Activated CD8-positive, alpha-beta T cell treated with anti-CD3 and anti-CD28 coated beads for 36 hours (primary cell): ENCODE measurements at regions of chr7 and their contacts with region 1.

Region 1: DNA sequence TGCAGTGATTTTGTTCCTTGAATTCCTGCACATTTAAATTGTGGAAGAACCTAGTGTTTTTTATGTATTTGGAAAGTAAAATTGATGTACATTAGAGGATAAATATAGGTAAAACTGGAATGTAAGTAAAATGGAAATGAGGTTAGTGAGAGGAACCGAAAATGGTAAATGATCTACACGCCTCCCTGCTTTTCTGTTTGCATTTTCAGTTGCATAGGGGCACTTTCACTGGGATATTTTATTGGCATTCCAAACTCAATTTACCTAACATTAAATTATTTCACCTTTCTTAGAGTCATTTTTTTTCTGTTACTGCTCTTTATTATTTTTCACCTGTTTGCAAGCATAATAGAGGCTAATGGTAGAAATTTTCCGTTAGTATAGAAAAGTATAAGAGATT is 8.0 kb downstream of the CDK13 start:
- DNase-seq: no peak
- ATAC-seq: no peak
- H3K4me3 Mint-ChIP-seq: no peak overlapping the region
- H3K27ac Mint-ChIP-seq: no peak overlapping the region
- H3K4me1 Mint-ChIP-seq: peaks cover 73% of the 10 kb centered on the region
- H3K27me3 Mint-ChIP-seq: no peaks in the 10 kb centered on the region
- CTCF ChIP-seq: no peak

Region 2: DNA sequence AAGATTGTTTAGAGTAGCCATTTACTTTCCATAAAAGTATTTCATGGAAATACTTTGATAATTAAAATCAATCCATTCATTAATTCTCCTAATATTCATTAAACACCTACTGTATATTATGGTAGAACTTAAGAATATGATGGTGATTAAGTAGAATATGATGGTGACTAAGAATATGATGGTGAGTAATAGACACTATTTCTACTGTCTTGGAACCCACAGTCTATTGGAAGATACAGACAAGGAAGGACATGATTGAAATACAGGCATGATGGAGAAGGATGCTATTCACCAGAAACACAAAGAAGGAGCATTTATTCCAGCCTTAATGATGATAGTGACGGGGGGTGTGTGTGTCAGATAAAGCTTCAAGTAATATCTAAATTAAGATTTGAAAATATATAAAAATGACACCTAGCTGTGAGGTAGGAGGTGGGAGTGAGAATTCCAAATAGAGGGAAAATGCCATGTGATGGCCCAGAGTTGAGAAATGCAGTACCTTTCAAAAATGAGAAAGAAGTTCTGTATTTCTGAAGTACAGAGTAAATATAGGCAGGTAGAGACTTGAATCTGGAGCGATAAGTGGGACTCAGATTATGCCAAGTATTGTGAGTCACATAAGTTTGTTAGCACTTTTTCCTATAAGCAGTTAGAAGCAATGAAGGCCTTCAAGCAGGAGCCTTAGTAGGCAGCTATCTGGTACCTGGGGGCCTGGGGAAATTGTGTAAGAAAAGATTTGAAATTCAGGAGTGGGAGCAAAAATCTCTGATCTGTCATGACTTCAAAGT is 20.5 kb before region 1 on chr7:
- CTCF ChIA-PET with region 1: no interaction called
- POLR2A ChIA-PET with region 1: no interaction called
- intact Hi-C with region 1: no loop called
- DNase-seq: no peak
- ATAC-seq: no peak
- H3K4me3 Mint-ChIP-seq: no peak overlapping the region
- H3K27ac Mint-ChIP-seq: no peak overlapping the region
- H3K4me1 Mint-ChIP-seq: no peaks in the 10 kb centered on the region
- H3K27me3 Mint-ChIP-seq: no peaks in the 10 kb centered on the region
- CTCF ChIP-seq: no peak

Region 3: DNA sequence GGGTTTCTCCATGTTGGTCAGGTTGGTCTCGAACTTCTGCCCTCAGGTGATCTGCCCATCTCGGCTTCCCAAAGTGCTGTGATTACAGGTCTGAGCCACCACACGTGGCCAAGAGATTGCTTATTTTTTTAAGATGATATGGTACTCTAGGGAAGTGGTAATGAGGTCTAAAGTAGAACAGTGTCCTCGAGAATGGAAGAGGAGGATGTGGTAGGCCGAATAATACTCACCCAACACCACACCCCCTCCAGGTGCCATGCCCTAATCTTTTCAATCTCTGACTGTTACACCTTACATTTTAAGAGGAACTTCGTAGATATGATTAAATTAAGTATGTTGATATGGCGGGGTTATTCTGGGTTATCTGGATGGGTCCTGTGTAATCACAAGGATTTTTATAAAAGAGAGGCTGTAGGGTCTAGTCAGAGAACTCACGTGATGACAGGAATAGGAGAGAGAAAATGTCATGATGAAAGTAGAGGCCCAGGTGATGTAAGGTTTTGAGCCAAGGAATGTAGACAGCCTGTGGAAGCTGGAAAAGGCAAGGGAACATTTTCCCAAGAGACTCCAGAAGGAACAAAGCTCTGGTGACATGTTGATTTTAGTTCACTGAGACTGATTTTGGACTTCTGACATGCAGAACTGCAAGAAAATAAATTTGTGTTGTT is 21.5 kb after region 1 on chr7:
- CTCF ChIA-PET with region 1: interaction called, 14 read pairs
- POLR2A ChIA-PET with region 1: interaction called, 3 read pairs
- intact Hi-C with region 1: no loop called
- DNase-seq: peak; percentile 56
- ATAC-seq: peak; percentile 87
- H3K4me3 Mint-ChIP-seq: no peak overlapping the region
- H3K27ac Mint-ChIP-seq: no peak overlapping the region
- H3K4me1 Mint-ChIP-seq: peaks cover 16% of the 10 kb centered on the region
- H3K27me3 Mint-ChIP-seq: no peaks in the 10 kb centered on the region
- CTCF ChIP-seq: no peak